ENCODE measurements at regions of chr21 and their contacts with region 1.

Region 1: DNA sequence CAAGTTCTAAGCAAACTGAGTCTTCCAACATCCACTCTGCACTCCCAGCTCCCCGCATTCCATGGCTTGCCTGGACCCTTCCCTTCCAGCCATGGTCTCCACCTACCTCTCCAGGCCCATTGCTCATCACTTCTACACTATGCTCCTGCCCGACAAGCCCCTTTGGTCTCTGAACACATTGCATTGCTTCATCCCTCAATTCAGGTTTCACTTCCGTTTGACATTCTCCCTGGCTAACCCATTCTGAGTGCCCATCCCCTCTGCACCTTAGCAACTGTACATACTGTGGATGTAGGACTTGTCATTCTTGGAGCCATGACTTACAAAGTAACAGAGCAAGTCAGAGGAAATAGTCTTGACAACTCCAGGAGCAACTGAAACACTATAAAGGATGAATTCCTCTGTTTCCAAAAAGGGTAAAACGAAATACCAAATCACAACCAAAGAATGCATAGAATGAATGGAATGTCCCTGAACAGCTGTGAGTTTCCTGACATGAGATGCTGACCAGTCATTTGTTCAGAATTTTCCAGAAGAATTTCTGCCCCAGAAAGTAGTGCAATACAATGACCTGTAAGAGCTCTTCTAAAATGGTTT is 66.7 kb downstream of the KCNJ6 start:
- DNase-seq: peak; percentile 54
- H3K4me3 ChIP-seq: no peak overlapping the region
- H3K27ac ChIP-seq: no peak overlapping the region
- H3K4me1 ChIP-seq: no peaks in the 10 kb centered on the region
- H3K27me3 ChIP-seq: no peaks in the 10 kb centered on the region
- CTCF ChIP-seq: no peak

Region 2: GRCh38 chr21:37878946-37879660 is 29.5 kb after region 1 on chr21:
- CTCF ChIA-PET with region 1: no interaction called
- dilution Hi-C with region 1: no loop called
- in situ Hi-C with region 1: no loop called
- intact Hi-C with region 1: loop called (anchors 2 kb)
- DNase-seq: peak; percentile 97
- H3K4me3 ChIP-seq: no peak overlapping the region
- H3K27ac ChIP-seq: no peak overlapping the region
- H3K4me1 ChIP-seq: peaks cover 3% of the 10 kb centered on the region
- H3K27me3 ChIP-seq: no peaks in the 10 kb centered on the region
- CTCF ChIP-seq: no peak

Measured in mammary epithelial cell (primary cell).